Activated CD4-positive, alpha-beta T cell treated with anti-CD3 and anti-CD28 coated beads, Interleukin-2, amount 10 ng/mL, durations not matched to agents 24 days and 14 days (primary cell): ENCODE measurements at regions of chr19 and their contacts with region 1.

Region 1: DNA sequence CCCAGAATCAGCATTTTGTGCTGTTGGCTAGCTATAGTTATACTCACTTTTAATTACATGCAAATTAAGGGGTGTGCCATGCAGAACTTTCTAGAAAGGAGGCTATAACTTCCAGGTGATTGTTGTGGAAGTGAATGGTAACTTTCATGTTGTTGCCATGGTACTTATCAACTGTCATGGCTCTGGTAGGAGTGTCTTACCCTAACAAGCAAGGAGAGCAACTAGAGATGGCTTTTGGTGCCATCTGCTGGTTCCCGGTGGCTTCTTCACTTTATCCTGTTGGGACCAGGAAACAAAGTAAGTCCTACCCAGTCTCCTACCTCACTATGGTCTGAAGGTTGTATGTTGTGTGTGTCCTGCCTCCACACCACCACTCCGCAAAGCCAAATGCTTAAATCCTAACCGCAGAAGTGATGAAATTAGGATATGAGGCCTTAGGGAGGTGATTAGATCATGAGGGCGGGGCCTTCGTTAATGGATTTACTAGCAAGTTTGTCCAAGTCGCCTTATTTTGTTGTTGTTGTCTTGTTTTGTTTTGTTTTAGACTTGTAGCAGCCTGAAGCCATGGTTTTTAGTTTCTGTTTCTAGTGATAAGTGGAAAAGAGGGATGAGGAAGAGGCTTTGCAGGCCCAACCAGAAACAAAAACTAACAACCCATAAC is 22.6 kb downstream of the FBXL12 start:
- DNase-seq: peak; percentile 96
- H3K4me3 Mint-ChIP-seq: no peak overlapping the region
- H3K27ac Mint-ChIP-seq: peak overlapping the region; percentile 63
- H3K4me1 Mint-ChIP-seq: peaks cover 21% of the 10 kb centered on the region
- H3K27me3 Mint-ChIP-seq: no peaks in the 10 kb centered on the region

Region 2: DNA sequence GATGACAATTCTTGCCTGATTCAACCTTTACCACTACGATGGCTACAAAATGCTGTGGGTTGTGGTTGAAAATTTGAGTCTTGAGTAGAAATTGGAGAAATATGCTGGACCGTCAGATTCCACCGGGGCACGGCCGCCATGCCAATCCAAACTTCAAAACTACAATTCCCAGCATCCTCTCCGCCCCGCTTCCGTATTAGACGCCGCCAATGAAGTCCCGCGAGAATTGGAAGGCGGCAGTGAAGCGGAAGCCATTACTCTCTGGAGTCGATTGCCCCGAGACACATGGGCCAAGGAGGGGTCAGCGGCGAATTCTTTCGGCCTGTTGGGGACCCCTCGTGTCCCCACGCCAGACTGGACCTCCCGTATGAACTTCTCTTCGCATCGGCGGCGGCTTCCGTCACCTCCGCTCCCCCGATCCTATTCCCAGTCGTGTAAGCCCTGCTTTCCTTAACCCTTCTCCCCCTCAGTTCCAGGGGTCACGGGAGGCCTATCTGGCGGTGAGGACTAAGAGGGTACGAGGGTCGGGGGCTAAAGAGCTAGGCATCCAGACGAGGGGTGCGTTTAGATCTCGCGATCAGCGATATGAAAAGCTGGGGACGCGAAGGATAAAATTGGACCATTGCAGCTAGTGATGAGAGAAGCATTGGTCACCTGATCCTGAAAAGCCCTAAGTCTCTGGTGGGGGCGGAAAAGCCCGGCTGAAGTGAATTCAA is 655.9 kb before region 1 on chr19 and contains the start of gene ZNF317:
- intact Hi-C with region 1: loop called (anchors 2 kb)
- DNase-seq: peak; percentile 97
- H3K4me3 Mint-ChIP-seq: peak within 1 kb of the TSS; percentile 97
- H3K27ac Mint-ChIP-seq: peak within 1 kb of the TSS; percentile 97
- H3K4me1 Mint-ChIP-seq: peaks cover 24% of the 10 kb centered on the region
- H3K27me3 Mint-ChIP-seq: no peaks in the 10 kb centered on the region
- total RNA-seq, gene ZNF317: 47.1 and 50.2 TPM in 2 replicates

Region 3: DNA sequence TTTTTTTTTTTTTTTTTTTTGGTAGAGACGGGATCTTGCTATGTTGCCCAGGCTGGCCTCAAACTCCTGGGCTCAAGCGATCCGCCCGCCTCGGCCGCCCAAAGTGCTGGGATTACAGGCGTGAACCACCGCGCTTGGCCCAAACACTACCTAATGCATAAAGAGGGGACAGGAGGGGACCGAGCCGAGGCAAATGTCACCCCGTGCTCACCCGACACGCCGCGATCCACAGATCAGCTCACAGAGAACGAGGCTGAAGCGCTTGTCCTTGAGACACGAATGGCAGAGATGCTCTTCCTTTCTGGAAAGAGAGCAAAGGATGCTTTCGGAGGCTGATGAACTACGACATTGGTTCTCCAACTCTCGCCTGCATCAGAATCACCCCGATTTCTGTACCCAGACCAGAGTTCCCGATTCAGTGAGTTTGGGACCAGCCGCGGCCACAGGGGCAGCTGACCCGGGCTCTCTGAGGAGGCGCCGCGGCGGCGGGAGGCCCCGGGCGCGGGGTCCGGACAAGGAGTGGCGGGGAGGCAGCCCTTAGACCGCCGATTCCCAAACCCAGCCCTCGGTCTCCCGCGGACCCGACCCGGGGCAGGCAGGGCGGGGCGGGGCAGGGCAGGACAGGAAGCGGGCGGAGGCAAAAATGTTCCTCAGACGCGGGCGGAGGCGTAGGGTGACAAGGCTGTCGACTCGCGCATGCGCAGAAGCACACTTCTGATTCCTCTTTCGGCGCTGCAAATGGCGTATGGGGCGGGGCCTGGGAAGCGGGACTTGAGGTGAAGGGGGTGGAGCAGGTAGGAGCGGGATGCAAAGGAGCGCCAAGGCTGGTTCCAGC is 486.9 kb before region 1 on chr19 and contains the start of gene ZNF699:
- intact Hi-C with region 1: loop called (anchors 5 kb)
- DNase-seq: peak; percentile 99
- H3K4me3 Mint-ChIP-seq: peak within 1 kb of the TSS; percentile 96
- H3K27ac Mint-ChIP-seq: peak within 1 kb of the TSS; percentile 94
- H3K4me1 Mint-ChIP-seq: peaks cover 14% of the 10 kb centered on the region
- H3K27me3 Mint-ChIP-seq: no peaks in the 10 kb centered on the region
- total RNA-seq, gene ZNF699: 4.4 and 4.5 TPM in 2 replicates

Region 4: DNA sequence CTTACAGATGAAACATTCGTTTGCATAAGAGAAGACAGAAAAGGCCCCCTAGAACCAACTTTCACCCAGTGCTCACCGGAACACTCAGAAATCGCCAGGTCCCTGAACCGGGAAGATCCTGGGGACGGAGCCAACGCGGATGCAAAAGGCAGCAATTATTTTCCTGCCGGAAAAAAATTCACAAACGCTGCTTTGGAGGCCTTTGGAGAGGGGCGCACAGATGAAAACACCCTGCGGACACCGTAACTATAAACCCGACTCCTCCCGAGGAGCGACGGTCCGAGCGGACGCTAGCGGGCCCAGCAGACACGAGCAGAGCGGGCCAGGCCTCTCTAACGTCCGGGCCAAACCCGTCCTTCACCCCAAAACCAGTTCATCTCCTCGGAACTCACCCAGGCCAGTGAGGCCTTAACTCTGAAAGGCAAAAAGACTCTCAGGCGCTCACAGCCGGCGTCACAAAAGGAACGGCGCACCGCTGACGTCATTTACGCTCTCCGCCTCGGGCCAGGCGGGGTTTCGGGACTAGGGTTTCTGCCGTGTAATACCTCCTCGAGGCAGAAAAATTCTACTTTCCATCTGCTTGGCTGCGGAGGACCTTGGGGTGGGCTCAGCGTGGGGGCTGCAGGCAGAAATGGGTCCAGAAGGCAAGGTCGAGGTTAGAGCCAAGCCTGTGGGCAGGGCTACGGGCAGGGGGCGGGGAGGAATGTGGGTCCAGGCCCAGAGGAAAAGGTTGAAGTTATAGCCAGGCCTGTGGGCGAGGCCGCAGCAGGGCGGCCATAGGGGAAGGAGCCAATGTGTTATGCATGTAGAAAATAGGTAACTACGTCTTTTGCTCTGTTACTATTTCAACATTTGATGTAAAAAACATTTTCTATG is 257.8 kb before region 1 on chr19 and contains the start of gene ZNF426:
- intact Hi-C with region 1: loop called (anchors 1 kb)
- DNase-seq: peak; percentile 95
- H3K4me3 Mint-ChIP-seq: peak within 1 kb of the TSS; percentile 97
- H3K27ac Mint-ChIP-seq: peak within 1 kb of the TSS; percentile 92
- H3K4me1 Mint-ChIP-seq: peaks cover 8% of the 10 kb centered on the region
- H3K27me3 Mint-ChIP-seq: no peaks in the 10 kb centered on the region
- total RNA-seq, gene ZNF426: 9.7 and 10.9 TPM in 2 replicates

Region 5: DNA sequence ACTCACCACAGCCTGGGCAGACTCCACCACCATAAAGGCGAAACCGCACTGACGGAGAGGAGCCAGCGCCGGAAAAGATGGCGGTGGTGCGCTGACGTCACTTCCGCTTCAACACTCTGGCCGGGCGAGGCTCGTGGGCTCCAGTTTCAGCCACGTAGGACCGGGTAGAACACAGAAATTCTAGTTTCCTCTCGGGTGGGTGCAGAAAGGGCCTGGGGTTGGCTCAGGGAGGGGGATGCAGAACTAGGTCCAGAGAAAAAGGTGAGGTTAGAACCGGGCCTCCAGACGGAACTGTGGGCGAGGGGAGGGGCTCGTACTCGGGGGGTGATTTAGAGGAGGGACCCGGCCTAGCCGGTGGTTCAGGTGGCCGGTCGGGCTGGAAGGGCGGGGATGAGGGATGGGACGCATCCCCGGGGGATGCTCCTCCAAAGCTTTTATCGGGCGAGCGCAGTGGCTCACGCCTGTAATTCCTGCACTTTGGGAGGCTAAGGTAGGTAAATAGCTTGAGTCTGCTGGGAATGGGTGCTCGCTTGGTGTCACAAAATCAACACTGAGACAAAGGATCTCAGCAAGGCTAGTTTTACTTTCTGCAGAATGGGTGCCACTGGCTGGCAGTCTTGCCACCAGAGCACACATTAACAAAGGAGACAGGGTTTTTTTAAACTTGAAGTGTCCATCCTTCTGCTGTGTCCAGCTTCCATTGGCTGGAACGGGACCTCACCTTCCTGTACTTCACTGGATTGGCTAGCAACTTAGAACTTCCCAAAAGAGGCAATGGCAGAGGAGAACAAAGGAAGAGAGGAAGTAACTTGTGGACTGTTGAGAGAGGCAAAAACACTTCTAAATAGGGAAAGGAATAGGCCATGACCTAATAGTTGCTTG is 174.8 kb before region 1 on chr19 and contains the start of gene ZNF561:
- intact Hi-C with region 1: loop called (anchors 1 kb)
- DNase-seq: peak; percentile 96
- H3K4me3 Mint-ChIP-seq: peak within 1 kb of the TSS; percentile 97
- H3K27ac Mint-ChIP-seq: peak within 1 kb of the TSS; percentile 98
- H3K4me1 Mint-ChIP-seq: peaks cover 23% of the 10 kb centered on the region
- H3K27me3 Mint-ChIP-seq: peaks cover 2% of the 10 kb centered on the region
- total RNA-seq, gene ZNF561: 35.3 and 37.2 TPM in 2 replicates

Region 6: DNA sequence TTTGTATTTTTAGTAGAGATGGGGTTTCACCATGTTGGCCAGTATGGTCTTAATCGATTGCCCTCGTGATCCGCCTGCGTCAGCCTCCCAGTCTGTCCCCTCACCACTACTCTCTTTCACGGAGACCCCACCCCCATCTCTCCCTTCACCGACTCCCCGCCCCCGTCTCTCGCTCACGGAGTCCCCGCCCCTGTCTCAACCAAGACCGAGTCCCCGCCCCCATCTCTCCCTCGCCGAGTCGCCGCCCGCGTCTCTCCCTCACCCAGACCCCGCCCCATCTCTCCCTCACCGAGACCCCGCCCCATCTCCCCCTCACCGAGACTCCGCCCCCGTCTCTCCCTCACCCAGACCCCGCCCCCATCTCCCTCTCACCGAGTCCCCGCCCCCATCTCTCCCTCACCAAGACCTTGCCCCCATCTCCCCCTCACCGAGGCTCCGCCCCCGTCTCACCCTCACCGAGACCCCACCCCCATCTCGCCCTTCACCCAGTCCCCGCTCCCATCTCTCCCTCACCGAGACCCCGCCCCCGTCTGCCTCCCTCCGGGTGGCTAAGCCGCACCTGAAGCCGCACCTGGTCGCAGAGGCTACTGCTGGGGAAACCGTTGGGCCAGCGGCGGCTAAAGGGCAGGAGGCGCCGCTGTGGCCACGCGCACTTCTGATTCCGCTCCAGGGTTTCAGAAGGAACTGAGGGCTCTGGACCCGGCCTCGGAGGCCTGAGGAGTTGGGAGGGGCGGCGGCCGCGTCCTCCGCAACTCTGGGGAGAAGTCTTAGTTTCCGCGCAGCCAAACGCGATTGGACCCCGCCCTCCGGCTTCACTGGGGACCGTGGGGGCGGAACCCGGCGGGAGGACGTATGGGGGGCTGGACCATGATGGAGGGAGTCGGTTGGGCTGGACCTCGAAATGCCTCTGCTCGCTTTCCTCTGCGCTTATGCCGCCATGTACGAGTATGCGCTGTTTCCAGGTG is 10.6 kb before region 1 on chr19:
- intact Hi-C with region 1: loop called (anchors 1 kb)
- DNase-seq: peak; percentile 97
- H3K4me3 Mint-ChIP-seq: peak overlapping the region; percentile 90
- H3K27ac Mint-ChIP-seq: peak overlapping the region; percentile 94
- H3K4me1 Mint-ChIP-seq: peaks cover 19% of the 10 kb centered on the region
- H3K27me3 Mint-ChIP-seq: no peaks in the 10 kb centered on the region